MCF 10A (cell line): ENCODE measurements at regions of chr6 and their contacts with region 1.

Region 1: GRCh38 chr6:35663447-35664235 is 25.1 kb downstream of the FKBP5 start:
- DNase-seq: peak; percentile 29
- H3K4me3 Mint-ChIP-seq: no peak overlapping the region
- H3K27ac Mint-ChIP-seq: no peak overlapping the region
- H3K4me1 Mint-ChIP-seq: peaks cover 10% of the 10 kb centered on the region
- H3K27me3 Mint-ChIP-seq: no peaks in the 10 kb centered on the region
- CTCF ChIP-seq: no peak

Region 2: GRCh38 chr6:35640017-35640664 is 23.5 kb before region 1 on chr6:
- CTCF ChIA-PET with region 1: interaction called, 4 read pairs
- POLR2A ChIA-PET with region 1: interaction called, 15 read pairs
- intact Hi-C with region 1: no loop called
- DNase-seq: no peak
- H3K4me3 Mint-ChIP-seq: no peak overlapping the region
- H3K27ac Mint-ChIP-seq: peak overlapping the region; percentile 19
- H3K4me1 Mint-ChIP-seq: peaks cover 37% of the 10 kb centered on the region
- H3K27me3 Mint-ChIP-seq: no peaks in the 10 kb centered on the region
- CTCF ChIP-seq: no peak

Region 3: DNA sequence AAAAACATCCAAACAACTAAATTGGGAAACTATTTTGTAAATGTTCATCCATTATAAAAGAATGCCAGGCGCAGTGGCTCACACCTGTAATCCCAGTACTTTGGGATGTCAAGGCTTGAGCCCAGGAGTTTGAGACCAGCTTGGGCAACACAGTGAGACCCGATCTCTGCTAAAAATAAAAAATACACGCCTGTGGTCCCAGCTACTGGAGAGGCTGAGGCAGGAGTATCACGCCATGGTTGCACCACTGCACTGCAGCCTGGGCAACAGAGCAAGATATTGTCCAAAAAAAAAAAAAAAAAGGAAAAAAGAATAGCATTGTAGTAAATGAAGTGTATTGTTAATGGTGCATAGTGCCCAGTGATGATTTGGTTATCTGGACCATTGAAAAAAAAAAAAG is 13.6 kb before region 1 on chr6:
- CTCF ChIA-PET with region 1: interaction called, 7 read pairs
- POLR2A ChIA-PET with region 1: interaction called, 28 read pairs
- intact Hi-C with region 1: no loop called
- DNase-seq: no peak
- H3K4me3 Mint-ChIP-seq: no peak overlapping the region
- H3K27ac Mint-ChIP-seq: no peak overlapping the region
- H3K4me1 Mint-ChIP-seq: peaks cover 27% of the 10 kb centered on the region
- H3K27me3 Mint-ChIP-seq: no peaks in the 10 kb centered on the region
- CTCF ChIP-seq: no peak

Region 4: GRCh38 chr6:35678021-35678654 is 14.5 kb after region 1 on chr6:
- CTCF ChIA-PET with region 1: interaction called, 8 read pairs
- POLR2A ChIA-PET with region 1: interaction called, 285 read pairs
- intact Hi-C with region 1: no loop called
- DNase-seq: no peak
- H3K4me3 Mint-ChIP-seq: peak overlapping the region; percentile 52
- H3K27ac Mint-ChIP-seq: peak overlapping the region; percentile 5
- H3K4me1 Mint-ChIP-seq: peaks cover 58% of the 10 kb centered on the region
- H3K27me3 Mint-ChIP-seq: no peaks in the 10 kb centered on the region
- CTCF ChIP-seq: no peak

Region 5: GRCh38 chr6:35746516-35746915 is 82.9 kb after region 1 on chr6:
- CTCF ChIA-PET with region 1: no interaction called
- POLR2A ChIA-PET with region 1: no interaction called
- intact Hi-C with region 1: no loop called
- DNase-seq: no peak
- H3K4me3 Mint-ChIP-seq: no peak overlapping the region
- H3K27ac Mint-ChIP-seq: no peak overlapping the region
- H3K4me1 Mint-ChIP-seq: no peaks in the 10 kb centered on the region
- H3K27me3 Mint-ChIP-seq: no peaks in the 10 kb centered on the region
- CTCF ChIP-seq: no peak

Region 6: DNA sequence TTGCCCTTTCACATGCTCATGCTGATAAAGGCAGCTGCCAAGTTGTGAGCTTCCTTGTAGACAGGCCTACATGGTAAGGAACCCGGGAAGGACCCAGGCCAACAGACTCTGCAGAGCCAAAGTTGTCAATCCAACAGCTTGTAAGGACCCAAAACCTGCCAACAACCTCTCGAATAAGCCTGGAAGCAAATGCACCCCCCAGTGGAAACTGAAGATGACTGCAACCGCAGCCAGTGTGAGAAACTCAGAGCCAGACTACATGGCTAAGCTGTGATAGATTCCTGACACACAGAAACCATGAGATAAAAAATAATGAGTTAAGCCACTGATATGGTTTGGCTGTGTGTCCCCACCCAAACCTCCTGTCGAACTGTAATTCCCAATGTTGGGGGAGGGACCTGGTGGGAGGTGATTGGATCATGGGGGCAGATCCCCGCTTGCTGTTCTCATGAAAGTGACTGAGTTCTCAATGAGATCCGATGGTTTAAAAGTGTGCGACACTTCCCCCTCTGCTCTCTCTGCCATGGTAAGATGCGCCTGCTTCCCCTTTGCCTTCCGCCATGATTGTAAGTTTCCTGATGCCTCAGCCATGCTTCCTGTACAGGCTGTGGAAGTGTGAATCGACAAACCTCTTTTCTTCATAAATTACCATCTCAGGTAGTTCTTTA is 93.9 kb after region 1 on chr6:
- CTCF ChIA-PET with region 1: no interaction called
- POLR2A ChIA-PET with region 1: no interaction called
- intact Hi-C with region 1: no loop called
- DNase-seq: peak; percentile 57
- H3K4me3 Mint-ChIP-seq: no peak overlapping the region
- H3K27ac Mint-ChIP-seq: no peak overlapping the region
- H3K4me1 Mint-ChIP-seq: no peaks in the 10 kb centered on the region
- H3K27me3 Mint-ChIP-seq: peaks cover 30% of the 10 kb centered on the region
- CTCF ChIP-seq: peak; percentile 21

Region 7: GRCh38 chr6:36207155-36207554 is 543.5 kb after region 1 on chr6:
- CTCF ChIA-PET with region 1: no interaction called
- POLR2A ChIA-PET with region 1: no interaction called
- intact Hi-C with region 1: no loop called
- DNase-seq: no peak
- H3K4me3 Mint-ChIP-seq: no peak overlapping the region
- H3K27ac Mint-ChIP-seq: no peak overlapping the region
- H3K4me1 Mint-ChIP-seq: no peaks in the 10 kb centered on the region
- H3K27me3 Mint-ChIP-seq: no peaks in the 10 kb centered on the region
- CTCF ChIP-seq: no peak